Vagina (tissue), 2 donors: ENCODE measurements at regions of chr1 and their contacts with region 1.

Region 1: DNA sequence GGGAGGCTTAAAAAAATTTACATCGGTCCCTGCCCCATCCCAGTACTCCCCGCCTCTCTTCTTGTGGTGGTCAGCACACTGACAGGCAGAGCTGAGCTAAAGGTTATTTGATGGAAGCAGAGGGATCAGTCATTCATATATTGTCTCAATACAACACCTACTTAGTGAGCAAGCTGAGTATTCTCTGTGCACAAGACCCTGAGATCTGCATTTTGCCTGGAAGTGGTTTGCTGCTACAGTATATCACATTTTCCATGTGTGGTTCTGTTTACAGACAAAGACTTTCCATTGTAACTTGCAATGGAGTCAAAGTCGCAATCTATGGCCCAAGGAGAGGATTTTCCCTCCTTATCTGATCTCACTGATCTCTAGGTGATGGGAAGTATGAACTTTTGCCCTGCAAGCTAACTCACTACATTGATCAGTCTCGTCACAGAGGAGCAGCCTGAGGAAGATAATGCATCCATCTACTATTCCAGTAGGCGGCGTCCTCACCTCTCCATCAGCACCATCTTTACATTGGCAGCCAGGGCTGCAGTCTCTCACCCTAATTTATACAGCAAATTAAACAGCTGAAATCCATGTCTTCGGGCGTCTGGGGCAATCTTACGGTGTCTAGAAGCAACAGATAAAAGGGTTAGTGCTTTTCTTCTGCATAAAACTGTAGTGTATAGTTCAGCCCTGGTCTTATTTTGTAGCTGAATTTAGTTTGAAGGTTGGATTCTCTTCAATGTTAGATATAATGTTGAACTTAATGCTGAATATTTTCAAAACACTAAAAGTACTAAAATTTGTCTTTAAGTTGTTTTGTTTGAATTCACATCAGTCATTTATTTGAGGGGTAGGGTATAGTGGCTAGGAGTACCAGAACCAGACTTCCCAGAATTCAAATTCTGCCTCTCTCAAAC is 3.2 kb upstream of the TRAF5 start:
- DNase-seq: no peak
- H3K4me3 ChIP-seq: no peak overlapping the region
- H3K27ac ChIP-seq: no peak overlapping the region
- H3K4me1 ChIP-seq: peaks cover 17% of the 10 kb centered on the region
- H3K27me3 ChIP-seq: no peaks in the 10 kb centered on the region
- CTCF ChIP-seq: peak in 2 of 3 experiments; percentile 30 to 56
- POLR2A ChIP-seq: no peak

Region 2: GRCh38 chr1:211258756-211259637 is 64.4 kb before region 1 on chr1 and contains the start of gene RCOR3:
- intact Hi-C with region 1: loop called (anchors 10 kb)
- DNase-seq: peak in 1 of 2 donors; percentile 94
- H3K4me3 ChIP-seq: peak within 1 kb of the TSS; percentile 85 to 96
- H3K27ac ChIP-seq: peak within 1 kb of the TSS; percentile 99
- H3K4me1 ChIP-seq: peaks cover 24% of the 10 kb centered on the region
- H3K27me3 ChIP-seq: no peaks in the 10 kb centered on the region
- CTCF ChIP-seq: peak in 1 of 3 experiments; percentile 36
- POLR2A ChIP-seq: peak in 1 of 2 donors; percentile 78
- total RNA-seq, gene RCOR3: 58.4 TPM

Region 3: DNA sequence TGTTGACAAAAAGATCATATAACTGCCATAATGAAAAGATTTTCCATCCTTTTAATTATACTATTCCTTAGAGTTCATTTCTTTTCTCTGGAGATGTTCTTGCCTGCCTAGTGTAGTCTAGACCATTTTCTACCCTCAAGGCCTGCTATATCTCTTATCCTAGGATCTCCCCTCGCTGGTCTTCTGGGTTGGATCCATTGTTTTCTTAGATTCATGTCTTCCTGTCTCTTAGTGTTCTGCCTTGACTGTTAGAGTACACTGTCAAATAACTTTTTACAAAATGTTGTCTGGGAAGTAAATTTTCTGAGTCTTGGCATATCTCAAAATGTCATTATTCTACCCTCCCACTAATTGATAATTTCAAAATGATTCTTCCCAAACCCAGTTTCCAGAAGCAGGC is 69.8 kb after region 1 on chr1:
- intact Hi-C with region 1: no loop called
- DNase-seq: no peak
- H3K4me3 ChIP-seq: no peak overlapping the region
- H3K27ac ChIP-seq: no peak overlapping the region
- H3K4me1 ChIP-seq: no peaks in the 10 kb centered on the region
- H3K27me3 ChIP-seq: no peaks in the 10 kb centered on the region
- CTCF ChIP-seq: no peak
- POLR2A ChIP-seq: no peak

Region 4: GRCh38 chr1:211874521-211875347 is 551.3 kb after region 1 on chr1:
- intact Hi-C with region 1: no loop called
- DNase-seq: no peak
- H3K4me3 ChIP-seq: no peak overlapping the region
- H3K27ac ChIP-seq: no peak overlapping the region
- H3K4me1 ChIP-seq: no peaks in the 10 kb centered on the region
- H3K27me3 ChIP-seq: no peaks in the 10 kb centered on the region
- CTCF ChIP-seq: no peak
- POLR2A ChIP-seq: no peak